Naive thymus-derived CD4-positive, alpha-beta T cell (primary cell): ENCODE measurements at regions of chr16 and their contacts with region 1.

Region 1: DNA sequence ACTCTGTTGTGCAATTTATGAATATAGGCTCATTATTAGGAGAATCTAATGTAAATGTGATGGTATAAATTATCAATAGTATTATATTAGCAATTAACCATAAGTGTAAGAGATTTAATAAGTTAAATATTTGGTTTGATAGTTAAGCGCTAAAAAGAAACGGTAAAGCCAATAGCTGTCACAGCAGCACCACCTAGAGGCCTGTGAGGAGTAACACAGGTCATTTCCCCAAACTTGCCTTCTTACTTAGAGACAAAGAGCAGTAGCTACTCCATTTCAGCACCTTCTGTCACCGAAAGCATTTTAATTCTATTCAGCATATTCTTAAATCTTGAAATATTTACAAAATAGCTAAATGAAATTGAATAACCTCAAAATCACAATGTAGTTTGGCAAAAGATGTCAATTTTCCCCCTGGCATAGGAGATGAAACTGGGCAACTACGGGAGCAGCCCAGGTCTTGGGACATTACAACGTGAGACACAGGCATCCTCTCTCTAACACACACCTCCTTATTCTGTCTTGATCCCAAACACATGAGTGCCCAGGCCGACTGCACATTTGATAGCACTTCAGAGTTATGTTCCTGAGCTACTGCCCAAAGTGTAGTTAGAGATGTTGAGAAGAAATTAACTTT is 14.2 kb upstream of the DYNLRB2 start:
- DNase-seq: peak; percentile 18 to 62 (median 51)
- ATAC-seq: peak; percentile 89
- H3K4me3 ChIP-seq: no peak overlapping the region
- H3K4me3 Mint-ChIP-seq: no peak overlapping the region
- H3K27ac ChIP-seq: no peak overlapping the region
- H3K27ac Mint-ChIP-seq: peak overlapping the region in 1 of 9 donors; percentile 4
- H3K4me1 ChIP-seq: no peaks in the 10 kb centered on the region
- H3K4me1 Mint-ChIP-seq: peaks cover 0 to 20% (median 0%) of the 10 kb centered on the region in 7 donors
- H3K27me3 ChIP-seq: no peaks in the 10 kb centered on the region
- H3K27me3 Mint-ChIP-seq: peaks cover 0 to 26% (median 0%) of the 10 kb centered on the region in 5 donors

Region 2: DNA sequence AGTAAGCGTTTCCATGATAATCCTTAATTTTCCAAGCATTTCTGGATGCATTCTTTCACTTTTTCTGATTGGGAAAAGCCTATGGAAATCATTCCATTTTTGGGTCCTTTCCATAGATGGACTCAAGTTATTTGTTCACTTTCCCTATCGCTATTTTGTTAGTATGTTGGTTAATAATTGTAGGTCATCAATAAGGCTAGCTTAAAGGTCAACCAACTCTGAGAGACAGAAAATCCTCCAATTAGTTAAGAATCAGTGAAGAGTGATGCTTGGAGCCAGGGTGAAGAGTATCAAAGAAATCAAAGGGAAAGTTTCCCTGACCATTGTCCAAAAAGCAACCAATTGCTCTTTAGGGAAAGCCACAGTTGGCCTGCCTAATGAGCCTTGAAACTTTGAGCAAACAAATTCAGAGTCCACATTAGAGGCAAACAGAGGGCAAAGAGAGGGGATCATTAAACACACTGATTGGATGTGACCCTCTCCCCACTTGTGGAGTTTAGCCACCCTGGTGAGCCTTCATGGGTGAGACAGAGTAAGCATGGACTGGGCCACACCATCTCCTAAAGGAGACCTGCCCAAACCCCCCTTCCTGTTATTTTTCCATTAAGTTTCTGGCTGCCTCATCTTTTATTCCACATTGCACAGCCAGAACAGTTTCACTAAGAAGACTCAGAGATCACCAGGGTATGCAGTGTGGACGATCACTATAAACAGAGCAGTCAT is 119.1 kb before region 1 on chr16:
- CTCF ChIA-PET with region 1: no interaction called
- POLR2A ChIA-PET with region 1: no interaction called
- intact Hi-C with region 1: no loop called
- DNase-seq: no peak
- ATAC-seq: no peak
- H3K4me3 ChIP-seq: no peak overlapping the region
- H3K4me3 Mint-ChIP-seq: no peak overlapping the region
- H3K27ac ChIP-seq: no peak overlapping the region
- H3K27ac Mint-ChIP-seq: no peak overlapping the region
- H3K4me1 ChIP-seq: no peaks in the 10 kb centered on the region
- H3K4me1 Mint-ChIP-seq: peaks cover 0 to 1% (median 0%) of the 10 kb centered on the region in 7 donors
- H3K27me3 ChIP-seq: no peaks in the 10 kb centered on the region
- H3K27me3 Mint-ChIP-seq: peaks cover 8 to 51% (median 30%) of the 10 kb centered on the region in 5 donors

Region 3: GRCh38 chr16:80500526-80500925 is 26.0 kb before region 1 on chr16:
- CTCF ChIA-PET with region 1: interaction called, 3 read pairs
- POLR2A ChIA-PET with region 1: no interaction called
- intact Hi-C with region 1: loop called in 1 of 2 experiments (anchors 1 kb)
- DNase-seq: no peak
- ATAC-seq: no peak
- H3K4me3 ChIP-seq: no peak overlapping the region
- H3K4me3 Mint-ChIP-seq: no peak overlapping the region
- H3K27ac ChIP-seq: no peak overlapping the region
- H3K27ac Mint-ChIP-seq: no peak overlapping the region
- H3K4me1 ChIP-seq: no peaks in the 10 kb centered on the region
- H3K4me1 Mint-ChIP-seq: peaks cover 0 to 9% (median 3%) of the 10 kb centered on the region in 7 donors
- H3K27me3 ChIP-seq: no peaks in the 10 kb centered on the region
- H3K27me3 Mint-ChIP-seq: peaks cover 0 to 14% (median 0%) of the 10 kb centered on the region in 5 donors

Region 4: DNA sequence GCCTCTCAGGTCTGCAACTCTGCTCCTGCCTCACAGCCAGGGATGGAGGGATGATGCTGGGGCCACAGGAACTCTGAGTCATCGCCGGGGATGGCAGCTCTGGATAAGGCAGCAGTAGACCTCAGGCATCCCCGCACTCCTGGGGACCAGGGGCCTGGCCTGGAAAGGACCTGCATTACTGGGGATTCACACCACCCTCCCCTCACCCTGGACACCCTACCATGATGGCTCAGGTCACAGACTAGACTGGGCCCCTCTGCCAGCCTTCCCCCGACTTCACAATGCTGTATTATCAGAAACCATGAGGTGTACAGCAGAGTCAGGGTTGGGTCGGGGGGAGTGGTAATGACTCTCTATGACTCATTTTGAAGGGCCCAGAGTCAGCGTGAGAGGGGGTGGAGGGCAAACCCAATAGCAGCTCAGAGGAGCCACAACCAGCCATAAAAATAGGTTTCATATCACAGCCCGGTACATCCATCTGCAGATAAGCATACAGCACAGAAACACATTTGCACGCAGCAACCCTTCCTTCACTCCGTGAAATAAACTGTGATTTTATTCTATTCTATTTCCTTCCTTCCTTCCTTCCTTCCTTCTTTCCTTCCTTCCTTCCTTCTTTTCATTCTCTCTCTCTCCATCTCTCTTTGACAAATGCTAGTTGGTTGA is 43.0 kb after region 1 on chr16:
- CTCF ChIA-PET with region 1: no interaction called
- POLR2A ChIA-PET with region 1: no interaction called
- intact Hi-C with region 1: no loop called
- DNase-seq: peak in 2 of 9 donors; percentile 24 to 74
- ATAC-seq: peak; percentile 78
- H3K4me3 ChIP-seq: no peak overlapping the region
- H3K4me3 Mint-ChIP-seq: peak overlapping the region in 4 of 10 donors; percentile 2 to 65 (median 12)
- H3K27ac ChIP-seq: no peak overlapping the region
- H3K27ac Mint-ChIP-seq: peak overlapping the region in 5 of 9 donors; percentile 3 to 86 (median 38)
- H3K4me1 ChIP-seq: peaks cover 5 to 19% of the 10 kb centered on the region in 2 donors
- H3K4me1 Mint-ChIP-seq: peaks cover 16 to 51% (median 28%) of the 10 kb centered on the region in 7 donors
- H3K27me3 ChIP-seq: no peaks in the 10 kb centered on the region
- H3K27me3 Mint-ChIP-seq: peaks cover 0 to 9% (median 0%) of the 10 kb centered on the region in 5 donors

Region 5: DNA sequence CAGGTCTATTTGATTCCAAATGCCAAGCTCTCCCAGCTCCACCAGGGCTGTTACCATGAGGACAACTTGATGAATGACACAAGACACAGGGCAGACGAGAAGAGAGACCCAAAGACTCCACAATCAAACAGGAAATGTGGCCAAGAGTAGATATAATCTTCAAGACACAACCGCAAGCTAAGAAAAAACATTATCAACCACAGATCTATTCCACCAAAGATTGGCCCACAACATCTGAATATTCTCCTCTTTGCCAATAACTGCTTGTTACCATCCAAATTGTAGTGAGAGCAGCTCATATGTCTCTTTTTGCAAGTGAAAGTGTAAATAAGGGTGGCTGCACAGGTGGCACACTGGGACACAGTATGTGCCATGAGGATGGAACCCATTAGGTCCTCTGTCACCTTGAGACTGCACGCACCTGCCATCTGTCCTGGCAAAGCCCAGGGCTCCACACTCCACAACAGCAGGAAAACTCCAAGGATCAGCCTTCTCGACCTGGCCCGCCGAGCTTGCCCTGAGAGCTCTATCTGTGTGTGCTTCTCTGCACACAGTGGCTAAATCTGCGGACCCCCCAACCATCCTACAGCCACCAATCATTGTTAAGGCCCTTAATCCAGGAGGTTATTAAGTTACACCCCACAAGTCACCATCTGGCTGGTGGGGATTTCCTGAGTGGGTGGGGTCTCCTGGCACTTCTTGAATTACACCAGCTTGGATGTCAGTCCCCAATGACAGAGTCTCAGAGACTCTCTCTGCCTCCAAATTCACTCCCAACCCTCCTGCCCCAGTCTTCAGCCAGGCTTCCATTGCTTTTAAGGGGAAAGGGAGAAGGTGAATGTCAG is 64.8 kb after region 1 on chr16:
- CTCF ChIA-PET with region 1: interaction called, 6 read pairs
- POLR2A ChIA-PET with region 1: no interaction called
- intact Hi-C with region 1: loop called in 1 of 2 experiments (anchors 1 kb)
- DNase-seq: peak in 8 of 9 donors; percentile 35 to 83 (median 68)
- ATAC-seq: peak; percentile 92
- H3K4me3 ChIP-seq: peak overlapping the region; percentile 42
- H3K4me3 Mint-ChIP-seq: peak overlapping the region; percentile 45 to 79 (median 64)
- H3K27ac ChIP-seq: no peak overlapping the region
- H3K27ac Mint-ChIP-seq: peak overlapping the region in 8 of 9 donors; percentile 1 to 82 (median 38)
- H3K4me1 ChIP-seq: peaks cover 10 to 19% of the 10 kb centered on the region in 2 donors
- H3K4me1 Mint-ChIP-seq: peaks cover 17 to 50% (median 29%) of the 10 kb centered on the region in 7 donors
- H3K27me3 ChIP-seq: no peaks in the 10 kb centered on the region
- H3K27me3 Mint-ChIP-seq: peaks cover 0 to 35% (median 5%) of the 10 kb centered on the region in 5 donors

Region 6: GRCh38 chr16:80656711-80657150 is 130.2 kb after region 1 on chr16:
- CTCF ChIA-PET with region 1: no interaction called
- POLR2A ChIA-PET with region 1: no interaction called
- intact Hi-C with region 1: loop called in 1 of 2 experiments (anchors 2 kb)
- DNase-seq: peak in 8 of 9 donors; percentile 25 to 60 (median 48)
- ATAC-seq: peak; percentile 85
- H3K4me3 ChIP-seq: peak overlapping the region; percentile 56
- H3K4me3 Mint-ChIP-seq: peak overlapping the region; percentile 71 to 92 (median 87)
- H3K27ac ChIP-seq: peak overlapping the region; percentile 68
- H3K27ac Mint-ChIP-seq: peak overlapping the region; percentile 80 to 97 (median 91)
- H3K4me1 ChIP-seq: peaks cover 6 to 14% of the 10 kb centered on the region in 2 donors
- H3K4me1 Mint-ChIP-seq: peaks cover 18 to 47% (median 28%) of the 10 kb centered on the region in 7 donors
- H3K27me3 ChIP-seq: no peaks in the 10 kb centered on the region
- H3K27me3 Mint-ChIP-seq: no peaks in the 10 kb centered on the region

Region 7: GRCh38 chr16:80852261-80852872 is 325.8 kb after region 1 on chr16:
- CTCF ChIA-PET with region 1: no interaction called
- POLR2A ChIA-PET with region 1: no interaction called
- intact Hi-C with region 1: loop called (anchors 1 kb)
- DNase-seq: peak in 2 of 9 donors; percentile 4 to 26
- ATAC-seq: no peak
- H3K4me3 ChIP-seq: no peak overlapping the region
- H3K4me3 Mint-ChIP-seq: no peak overlapping the region
- H3K27ac ChIP-seq: no peak overlapping the region
- H3K27ac Mint-ChIP-seq: no peak overlapping the region
- H3K4me1 ChIP-seq: no peaks in the 10 kb centered on the region
- H3K4me1 Mint-ChIP-seq: no peaks in the 10 kb centered on the region
- H3K27me3 ChIP-seq: no peaks in the 10 kb centered on the region
- H3K27me3 Mint-ChIP-seq: peaks cover 0 to 27% (median 9%) of the 10 kb centered on the region in 5 donors